ENCODE measurements at regions of chr5 and their contacts with region 1.

Region 1: DNA sequence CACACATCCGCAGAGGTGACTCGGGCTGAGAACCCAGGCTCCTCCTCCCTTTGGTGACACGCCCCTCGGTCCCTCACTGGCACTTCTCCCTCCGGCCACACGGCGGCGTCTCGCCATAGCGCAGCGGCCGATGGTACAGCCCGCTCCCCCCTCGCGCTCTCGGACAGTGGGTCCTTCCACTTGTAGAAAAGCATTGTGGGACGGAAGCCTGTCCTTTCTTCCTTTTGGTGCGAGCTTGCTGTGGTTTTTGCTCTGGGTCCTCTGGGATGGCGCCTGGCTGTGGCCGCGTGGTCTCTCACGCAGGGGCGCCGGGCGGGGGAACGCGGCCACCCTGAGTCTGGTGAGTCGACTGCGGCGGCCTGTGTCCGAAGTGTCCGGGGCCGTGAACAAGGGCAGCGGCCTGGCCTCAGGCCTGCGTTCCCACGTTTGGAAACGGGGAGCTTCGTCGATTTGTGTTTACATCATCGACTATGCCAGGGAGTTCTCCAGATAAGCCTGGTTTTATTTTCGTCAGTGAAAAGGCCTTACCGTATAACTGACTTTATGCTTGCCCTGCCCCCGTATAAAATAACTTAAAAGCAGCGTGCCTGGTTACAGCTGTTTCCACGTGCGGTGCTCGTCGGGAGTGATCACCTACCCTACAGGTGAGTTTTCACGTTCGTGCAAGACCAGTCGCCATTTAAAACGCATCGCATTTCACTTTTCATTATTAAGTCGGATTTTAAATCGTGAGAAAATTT is 258.3 kb downstream of the EPB41L4A start:
- DNase-seq: peak; percentile 92
- H3K4me3 ChIP-seq: peak overlapping the region; percentile 99
- H3K27ac ChIP-seq: peak overlapping the region; percentile 56
- H3K4me1 ChIP-seq: peaks cover 21% of the 10 kb centered on the region
- CTCF ChIP-seq: peak; percentile 92

Region 2: GRCh38 chr5:111512375-111513130 is 648.3 kb before region 1 on chr5 and contains the start of gene STARD4:
- CTCF ChIA-PET with region 1: no interaction called
- POLR2A ChIA-PET with region 1: interaction called, 11 read pairs
- intact Hi-C with region 1: loop called (anchors 1 kb)
- DNase-seq: peak; percentile 96
- H3K4me3 ChIP-seq: peak within 1 kb of the TSS; percentile 91
- H3K27ac ChIP-seq: peak within 1 kb of the TSS; percentile 69
- H3K4me1 ChIP-seq: peaks cover 38% of the 10 kb centered on the region
- CTCF ChIP-seq: no peak
- total RNA-seq, gene STARD4: 28.1 and 30.4 TPM in 2 replicates

Region 3: DNA sequence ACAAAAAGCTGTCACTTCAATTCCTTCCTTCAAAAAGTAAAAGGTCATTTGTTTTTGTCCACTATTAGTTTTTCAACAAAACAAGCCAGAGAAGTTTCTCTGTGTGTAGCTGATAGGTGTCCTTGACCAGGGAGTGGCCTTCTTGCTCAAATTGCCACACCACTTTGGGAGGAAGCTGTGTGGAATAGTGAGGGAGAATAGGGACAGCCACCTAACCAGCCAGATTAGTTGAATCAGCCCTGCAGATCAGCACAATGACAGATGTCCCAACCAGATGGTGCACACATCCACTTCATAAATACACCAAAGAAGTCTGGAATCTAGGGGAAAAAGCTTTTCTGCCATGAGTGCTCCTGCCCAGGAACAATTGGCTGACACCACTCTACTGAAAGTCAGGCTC is 441.0 kb before region 1 on chr5:
- CTCF ChIA-PET with region 1: no interaction called
- POLR2A ChIA-PET with region 1: interaction called, 10 read pairs
- intact Hi-C with region 1: no loop called
- DNase-seq: no peak
- H3K4me3 ChIP-seq: no peak overlapping the region
- H3K27ac ChIP-seq: no peak overlapping the region
- H3K4me1 ChIP-seq: no peaks in the 10 kb centered on the region
- CTCF ChIP-seq: no peak

Region 4: GRCh38 chr5:112116371-112116770 is 44.5 kb before region 1 on chr5:
- CTCF ChIA-PET with region 1: no interaction called
- POLR2A ChIA-PET with region 1: no interaction called
- intact Hi-C with region 1: no loop called
- DNase-seq: no peak
- H3K4me3 ChIP-seq: no peak overlapping the region
- H3K27ac ChIP-seq: no peak overlapping the region
- H3K4me1 ChIP-seq: no peaks in the 10 kb centered on the region
- CTCF ChIP-seq: no peak

Region 5: DNA sequence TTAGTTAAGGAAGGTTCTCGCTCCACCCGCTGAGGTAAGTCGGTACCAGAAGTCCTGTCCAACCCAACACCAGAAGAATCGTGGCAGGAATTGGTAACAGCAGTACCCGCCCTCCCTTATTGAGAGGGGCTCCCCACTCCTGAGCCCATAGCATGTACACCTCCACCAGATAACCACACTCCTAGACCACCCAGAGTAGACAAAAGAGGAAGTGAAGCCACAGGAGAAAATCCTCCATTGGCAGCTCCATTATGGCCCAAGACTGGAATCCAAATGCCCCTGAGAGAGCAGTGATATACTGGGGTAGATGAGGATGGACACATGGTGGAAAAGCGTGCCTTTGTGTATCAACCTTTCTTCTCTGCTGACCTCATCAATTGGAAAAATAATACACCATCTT is 364.4 kb after region 1 on chr5:
- CTCF ChIA-PET with region 1: no interaction called
- POLR2A ChIA-PET with region 1: no interaction called
- intact Hi-C with region 1: loop called (anchors 1 kb)
- DNase-seq: peak; percentile 19
- H3K4me3 ChIP-seq: no peak overlapping the region
- H3K27ac ChIP-seq: no peak overlapping the region
- H3K4me1 ChIP-seq: peaks cover 52% of the 10 kb centered on the region
- CTCF ChIP-seq: no peak